Cardiac septum (tissue), 1 donor: ENCODE measurements at regions of chr18 and their contacts with region 1.

Region 1: GRCh38 chr18:79951578-79952455 is at the start of gene SLC66A2:
- DNase-seq: peak; percentile 98
- total RNA-seq, gene SLC66A2: 23.5 TPM

Region 2: GRCh38 chr18:79988451-79989194 is 36.8 kb after region 1 on chr18 and contains the start of gene TXNL4A:
- intact Hi-C with region 1: loop called (anchors 2 kb)
- DNase-seq: peak; percentile 94
- total RNA-seq, gene TXNL4A: 96.5 TPM